ENCODE measurements at regions of chr13 and their contacts with region 1.

Region 1: GRCh38 chr13:46662690-46663089 is 109.7 kb downstream of the LRCH1 start:
- DNase-seq: no peak
- H3K4me3 ChIP-seq: no peak overlapping the region
- H3K4me3 Mint-ChIP-seq: no peak overlapping the region
- H3K27ac Mint-ChIP-seq: peak overlapping the region; percentile 80
- H3K4me1 ChIP-seq: peaks cover 93% of the 10 kb centered on the region
- H3K4me1 Mint-ChIP-seq: peaks cover 61% of the 10 kb centered on the region
- H3K27me3 ChIP-seq: no peaks in the 10 kb centered on the region
- H3K27me3 Mint-ChIP-seq: no peaks in the 10 kb centered on the region
- CTCF ChIP-seq: no peak

Region 2: DNA sequence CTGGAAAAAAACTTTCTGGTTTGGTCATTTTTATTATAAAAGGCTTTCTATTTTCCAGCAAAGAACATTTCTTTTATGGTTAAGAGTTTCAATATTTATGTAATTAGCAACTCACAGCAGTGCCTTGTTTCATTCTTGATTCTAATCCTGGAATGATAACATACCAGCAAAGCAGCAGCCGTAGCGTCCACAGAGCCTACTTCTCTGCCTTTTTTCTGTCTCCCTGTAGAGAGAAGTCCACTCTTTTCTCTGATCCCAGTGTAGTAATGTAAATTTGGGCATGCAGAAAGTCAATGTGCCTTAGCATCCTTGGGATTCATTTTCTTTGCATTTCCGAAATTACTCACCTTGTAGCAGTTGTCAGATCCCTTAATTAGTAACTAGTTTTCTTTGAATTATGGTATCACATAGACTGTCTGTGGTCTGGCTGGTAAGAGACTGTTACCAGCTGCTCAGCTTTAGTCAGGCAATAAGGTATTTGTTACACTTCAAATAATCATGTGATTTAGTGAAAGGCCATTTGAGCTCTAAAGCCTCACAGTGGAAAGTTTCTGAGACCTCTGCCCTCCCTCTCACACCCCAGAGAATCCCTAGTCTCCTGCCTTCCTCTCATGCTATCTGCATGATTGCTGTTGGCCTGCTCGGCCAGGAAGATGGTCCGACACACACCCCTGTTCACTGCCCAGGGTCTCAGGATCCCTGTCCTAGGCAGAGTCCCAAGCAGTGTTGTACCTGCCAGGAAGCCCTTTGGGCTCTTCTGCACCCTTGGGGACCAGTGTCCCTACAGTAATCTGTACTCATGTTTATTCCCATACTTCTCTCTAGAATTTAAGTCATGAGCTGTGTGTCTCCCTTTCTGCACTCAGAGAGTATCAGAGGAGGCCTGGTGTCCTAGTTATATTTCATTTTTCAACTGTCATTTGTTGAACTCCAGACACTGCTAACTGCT is 23.4 kb before region 1 on chr13:
- CTCF ChIA-PET with region 1: interaction called, 5 read pairs
- POLR2A ChIA-PET with region 1: interaction called, 4 read pairs
- intact Hi-C with region 1: loop called (anchors 2 kb)
- DNase-seq: no peak
- H3K4me3 ChIP-seq: no peak overlapping the region
- H3K4me3 Mint-ChIP-seq: no peak overlapping the region
- H3K27ac Mint-ChIP-seq: no peak overlapping the region
- H3K4me1 ChIP-seq: peaks cover 59% of the 10 kb centered on the region
- H3K4me1 Mint-ChIP-seq: peaks cover 61% of the 10 kb centered on the region
- H3K27me3 ChIP-seq: no peaks in the 10 kb centered on the region
- H3K27me3 Mint-ChIP-seq: no peaks in the 10 kb centered on the region
- CTCF ChIP-seq: no peak

Measured in Caco-2 (cell line).